ENCODE measurements at regions of chr6 and their contacts with region 1.

Region 1: DNA sequence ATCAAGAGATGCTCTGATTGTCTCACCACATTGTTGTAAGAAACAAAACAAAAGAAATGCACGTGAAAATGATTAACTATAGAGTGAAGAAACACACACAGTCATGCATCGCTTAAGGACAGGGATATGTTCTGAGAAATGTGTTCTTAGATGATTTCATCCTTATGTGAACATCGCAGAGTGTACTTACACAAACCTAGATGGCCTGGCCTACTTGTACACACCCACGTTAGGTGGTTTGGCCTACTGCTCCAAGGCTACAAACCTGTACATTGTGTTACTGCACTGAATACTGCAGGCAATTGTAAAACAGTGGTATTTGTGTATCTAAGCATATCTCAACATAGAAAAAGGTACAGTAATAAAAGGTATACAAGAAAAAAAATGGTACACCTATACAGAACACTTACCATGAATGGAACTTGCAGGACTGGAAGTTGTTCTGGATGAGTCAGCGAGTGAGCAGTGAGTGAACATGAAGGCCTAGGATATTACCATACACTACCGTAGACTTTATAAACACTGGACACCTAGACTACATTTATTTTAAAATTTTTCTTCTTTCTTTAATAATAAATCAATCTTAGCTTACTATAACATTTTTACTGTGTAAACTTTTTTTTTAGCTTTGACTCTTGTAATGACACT is 48.6 kb downstream of the FKBP5 start:
- DNase-seq: no peak
- H3K4me3 ChIP-seq: no peak overlapping the region
- H3K4me3 Mint-ChIP-seq: no peak overlapping the region
- H3K27ac ChIP-seq: no peak overlapping the region
- H3K27ac Mint-ChIP-seq: peak overlapping the region in 2 of 8 donors; percentile 58 to 73
- H3K4me1 ChIP-seq: peaks cover 32% of the 10 kb centered on the region
- H3K4me1 Mint-ChIP-seq: peaks cover 31 to 55% (median 46%) of the 10 kb centered on the region in 3 donors
- H3K27me3 ChIP-seq: no peaks in the 10 kb centered on the region
- H3K27me3 Mint-ChIP-seq: no peaks in the 10 kb centered on the region

Region 2: GRCh38 chr6:35663447-35664235 is 23.5 kb after region 1 on chr6:
- CTCF ChIA-PET with region 1: interaction called, 10 read pairs
- POLR2A ChIA-PET with region 1: interaction called, 3 read pairs
- DNase-seq: no peak
- H3K4me3 ChIP-seq: peak overlapping the region; percentile 34
- H3K4me3 Mint-ChIP-seq: no peak overlapping the region
- H3K27ac ChIP-seq: no peak overlapping the region
- H3K27ac Mint-ChIP-seq: no peak overlapping the region
- H3K4me1 ChIP-seq: peaks cover 57% of the 10 kb centered on the region
- H3K4me1 Mint-ChIP-seq: peaks cover 16 to 36% (median 20%) of the 10 kb centered on the region in 3 donors
- H3K27me3 ChIP-seq: no peaks in the 10 kb centered on the region
- H3K27me3 Mint-ChIP-seq: no peaks in the 10 kb centered on the region

Region 3: GRCh38 chr6:35931120-35931561 is 291.0 kb after region 1 on chr6:
- CTCF ChIA-PET with region 1: no interaction called
- POLR2A ChIA-PET with region 1: no interaction called
- DNase-seq: no peak
- H3K4me3 ChIP-seq: no peak overlapping the region
- H3K4me3 Mint-ChIP-seq: no peak overlapping the region
- H3K27ac ChIP-seq: no peak overlapping the region
- H3K27ac Mint-ChIP-seq: no peak overlapping the region
- H3K4me1 ChIP-seq: no peaks in the 10 kb centered on the region
- H3K4me1 Mint-ChIP-seq: no peaks in the 10 kb centered on the region
- H3K27me3 ChIP-seq: no peaks in the 10 kb centered on the region
- H3K27me3 Mint-ChIP-seq: peaks cover 4 to 7% of the 10 kb centered on the region in 2 donors

Measured in CD8-positive, alpha-beta memory T cell (primary cell).